ENCODE measurements at regions of chr5 and their contacts with region 1.

Region 1: DNA sequence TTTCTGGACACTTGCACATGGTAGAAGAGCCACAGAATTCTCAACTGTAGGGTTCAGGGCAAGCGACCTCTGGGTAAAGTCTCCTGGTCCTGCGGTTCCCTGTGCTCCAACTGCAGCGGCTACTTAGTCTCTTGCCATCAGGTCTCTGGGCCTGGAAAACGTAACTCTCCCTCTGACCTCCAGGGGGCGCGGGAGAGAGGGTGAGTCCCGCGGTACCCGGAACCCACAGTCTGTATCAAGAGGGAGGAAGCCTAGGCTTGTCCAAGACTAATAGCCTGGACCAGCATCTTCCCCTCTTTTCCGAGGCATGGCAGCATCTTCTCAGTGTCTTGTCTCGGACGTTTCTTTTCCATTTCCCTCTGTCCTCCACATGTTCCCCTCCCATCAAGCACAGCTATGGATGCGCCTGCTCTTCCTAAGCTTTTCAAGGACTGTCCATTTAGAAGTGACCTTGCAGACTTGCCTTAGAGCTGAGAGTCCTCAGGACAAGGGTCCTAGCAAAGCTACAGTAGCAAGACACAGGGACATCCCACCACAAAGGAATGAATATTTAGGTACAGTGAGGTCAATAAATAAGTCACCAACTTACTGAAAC is 59.3 kb downstream of the FSTL4 start:
- DNase-seq: peak; percentile 79
- H3K4me3 Mint-ChIP-seq: no peak overlapping the region
- H3K27ac Mint-ChIP-seq: no peak overlapping the region
- H3K4me1 Mint-ChIP-seq: no peaks in the 10 kb centered on the region
- H3K27me3 Mint-ChIP-seq: peaks cover 18% of the 10 kb centered on the region

Region 2: GRCh38 chr5:133610489-133611356 is 57.7 kb after region 1 on chr5:
- CTCF ChIA-PET with region 1: interaction called, 3 read pairs
- intact Hi-C with region 1: loop called (anchors 1 kb)
- DNase-seq: peak; percentile 69
- H3K4me3 Mint-ChIP-seq: peak overlapping the region; percentile 51
- H3K27ac Mint-ChIP-seq: no peak overlapping the region
- H3K4me1 Mint-ChIP-seq: peaks cover 12% of the 10 kb centered on the region
- H3K27me3 Mint-ChIP-seq: peaks cover 52% of the 10 kb centered on the region

Measured in activated naive CD4-positive, alpha-beta T cell treated with anti-CD3 and anti-CD28 coated beads for 36 hours (primary cell).